ENCODE measurements at regions of chr2 and their contacts with region 1.

Region 1: DNA sequence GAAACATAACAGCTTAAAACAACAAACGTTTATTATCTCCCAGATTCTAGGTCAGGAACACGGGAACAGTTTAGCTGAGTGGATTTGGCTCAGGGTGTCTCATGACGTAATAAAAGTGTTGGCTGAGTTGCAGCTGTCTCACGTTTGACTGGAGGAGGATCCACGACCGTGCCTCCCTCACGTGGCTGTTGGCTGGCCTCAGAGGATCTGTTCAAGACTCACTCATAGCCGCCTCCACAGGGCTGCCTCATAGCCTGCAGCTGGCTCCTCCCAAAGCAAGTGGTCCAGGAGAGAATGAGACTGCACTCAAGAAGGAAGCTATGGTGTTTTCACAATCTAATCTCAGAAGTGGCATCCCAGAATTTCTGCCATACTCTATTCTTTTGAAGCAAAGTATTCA is 167.1 kb downstream of the RPRM start:
- DNase-seq: no peak
- H3K4me3 ChIP-seq: no peak overlapping the region
- H3K27ac ChIP-seq: no peak overlapping the region
- H3K4me1 ChIP-seq: no peaks in the 10 kb centered on the region
- CTCF ChIP-seq: no peak

Region 2: GRCh38 chr2:153347818-153348495 is 36.5 kb after region 1 on chr2:
- CTCF ChIA-PET with region 1: no interaction called
- POLR2A ChIA-PET with region 1: no interaction called
- intact Hi-C with region 1: loop called (anchors 1 kb)
- DNase-seq: no peak
- H3K4me3 ChIP-seq: no peak overlapping the region
- H3K27ac ChIP-seq: no peak overlapping the region
- H3K4me1 ChIP-seq: no peaks in the 10 kb centered on the region
- CTCF ChIP-seq: no peak